CD4-positive, alpha-beta T cell (primary cell): ENCODE measurements at regions of chr11 and their contacts with region 1.

Region 1: DNA sequence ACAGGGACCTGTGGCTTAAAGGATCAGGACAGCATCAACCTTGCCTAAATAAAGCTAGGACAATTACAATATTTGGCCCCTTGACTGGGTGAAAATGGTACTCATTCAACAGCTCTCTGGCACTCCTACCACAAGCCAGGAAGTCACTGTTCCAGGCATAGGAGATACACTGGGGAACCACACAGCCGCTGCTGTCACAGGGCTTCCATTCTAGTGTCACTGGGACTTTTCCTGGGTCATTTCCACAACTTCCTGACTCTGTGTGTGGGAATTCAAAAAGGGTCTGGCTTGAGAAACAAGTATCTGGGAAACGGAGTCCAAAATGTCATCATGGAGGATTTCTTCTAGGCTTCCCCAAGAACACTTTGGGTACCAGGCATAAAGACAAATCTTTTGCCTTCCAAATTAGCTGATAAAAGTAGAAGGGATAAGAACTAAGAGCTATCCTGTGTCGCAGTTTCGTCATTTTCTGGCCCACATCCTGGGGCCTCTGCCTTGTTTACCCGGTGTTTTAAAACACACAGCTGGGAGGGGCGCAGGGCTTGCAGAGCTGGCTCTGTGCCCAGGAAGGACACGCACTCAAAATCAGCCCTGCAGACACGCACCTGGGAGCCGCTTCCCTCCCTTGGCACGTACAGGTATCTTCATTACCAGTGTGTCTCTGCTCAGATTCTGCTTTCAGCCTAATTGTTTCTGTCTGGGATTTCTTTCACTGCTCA is 38.0 kb downstream of the TMEM45B start:
- DNase-seq: peak; percentile 72 to 92 (median 86)
- ATAC-seq: peak; percentile 93
- H3K4me3 ChIP-seq: peak overlapping the region; percentile 7
- H3K4me3 Mint-ChIP-seq: peak overlapping the region; percentile 73
- H3K27ac ChIP-seq: peak overlapping the region; percentile 65 to 66
- H3K27ac Mint-ChIP-seq: peak overlapping the region; percentile 97
- H3K4me1 ChIP-seq: peaks cover 29% of the 10 kb centered on the region
- H3K4me1 Mint-ChIP-seq: peaks cover 53% of the 10 kb centered on the region
- H3K27me3 ChIP-seq: no peaks in the 10 kb centered on the region
- H3K27me3 Mint-ChIP-seq: no peaks in the 10 kb centered on the region
- CTCF ChIP-seq: no peak

Region 2: GRCh38 chr11:129410395-129410960 is 443.2 kb before region 1 on chr11:
- CTCF ChIA-PET with region 1: no interaction called
- POLR2A ChIA-PET with region 1: no interaction called
- intact Hi-C with region 1: no loop called
- DNase-seq: no peak
- ATAC-seq: no peak
- H3K4me3 ChIP-seq: no peak overlapping the region
- H3K4me3 Mint-ChIP-seq: no peak overlapping the region
- H3K27ac ChIP-seq: no peak overlapping the region
- H3K27ac Mint-ChIP-seq: no peak overlapping the region
- H3K4me1 ChIP-seq: no peaks in the 10 kb centered on the region
- H3K4me1 Mint-ChIP-seq: no peaks in the 10 kb centered on the region
- H3K27me3 ChIP-seq: no peaks in the 10 kb centered on the region
- H3K27me3 Mint-ChIP-seq: peaks cover 9% of the 10 kb centered on the region
- CTCF ChIP-seq: no peak

Region 3: GRCh38 chr11:129785383-129786111 is 68.1 kb before region 1 on chr11:
- CTCF ChIA-PET with region 1: no interaction called
- POLR2A ChIA-PET with region 1: interaction called, 10 read pairs
- intact Hi-C with region 1: loop called in 1 of 2 experiments (anchors 5 kb)
- DNase-seq: peak in 3 of 14 experiments; percentile 7 to 43 (median 29)
- ATAC-seq: no peak
- H3K4me3 ChIP-seq: no peak overlapping the region
- H3K4me3 Mint-ChIP-seq: no peak overlapping the region
- H3K27ac ChIP-seq: no peak overlapping the region
- H3K27ac Mint-ChIP-seq: no peak overlapping the region
- H3K4me1 ChIP-seq: peaks cover 4% of the 10 kb centered on the region
- H3K4me1 Mint-ChIP-seq: peaks cover 8% of the 10 kb centered on the region
- H3K27me3 ChIP-seq: no peaks in the 10 kb centered on the region
- H3K27me3 Mint-ChIP-seq: no peaks in the 10 kb centered on the region
- CTCF ChIP-seq: peak; percentile 67

Region 4: DNA sequence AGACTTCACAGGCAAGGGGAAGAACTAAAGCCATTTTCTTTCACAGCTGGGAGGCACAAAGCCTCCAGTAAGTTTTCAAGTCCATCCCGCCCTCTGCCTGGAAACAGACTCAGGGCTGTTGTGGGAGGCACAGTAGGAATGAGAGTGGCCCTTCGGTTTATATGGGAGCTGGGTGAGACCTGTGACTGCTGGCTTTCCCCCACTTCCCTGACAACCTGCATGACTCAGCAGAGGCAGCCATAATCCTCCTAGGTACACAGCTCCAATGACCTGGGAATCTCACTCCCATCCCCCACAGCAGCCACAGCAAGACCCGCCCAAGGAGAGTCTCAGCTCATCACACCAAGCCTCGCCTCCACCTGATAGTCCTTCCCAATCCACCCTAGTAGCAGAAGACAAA is 50.1 kb before region 1 on chr11:
- CTCF ChIA-PET with region 1: no interaction called
- POLR2A ChIA-PET with region 1: interaction called, 33 read pairs
- intact Hi-C with region 1: no loop called
- DNase-seq: no peak
- ATAC-seq: peak; percentile 18
- H3K4me3 ChIP-seq: no peak overlapping the region
- H3K4me3 Mint-ChIP-seq: peak overlapping the region; percentile 57
- H3K27ac ChIP-seq: peak overlapping the region in 1 of 2 donors; percentile 10
- H3K27ac Mint-ChIP-seq: peak overlapping the region; percentile 86
- H3K4me1 ChIP-seq: peaks cover 16% of the 10 kb centered on the region
- H3K4me1 Mint-ChIP-seq: peaks cover 57% of the 10 kb centered on the region
- H3K27me3 ChIP-seq: no peaks in the 10 kb centered on the region
- H3K27me3 Mint-ChIP-seq: peaks cover 6% of the 10 kb centered on the region
- CTCF ChIP-seq: no peak

Region 5: DNA sequence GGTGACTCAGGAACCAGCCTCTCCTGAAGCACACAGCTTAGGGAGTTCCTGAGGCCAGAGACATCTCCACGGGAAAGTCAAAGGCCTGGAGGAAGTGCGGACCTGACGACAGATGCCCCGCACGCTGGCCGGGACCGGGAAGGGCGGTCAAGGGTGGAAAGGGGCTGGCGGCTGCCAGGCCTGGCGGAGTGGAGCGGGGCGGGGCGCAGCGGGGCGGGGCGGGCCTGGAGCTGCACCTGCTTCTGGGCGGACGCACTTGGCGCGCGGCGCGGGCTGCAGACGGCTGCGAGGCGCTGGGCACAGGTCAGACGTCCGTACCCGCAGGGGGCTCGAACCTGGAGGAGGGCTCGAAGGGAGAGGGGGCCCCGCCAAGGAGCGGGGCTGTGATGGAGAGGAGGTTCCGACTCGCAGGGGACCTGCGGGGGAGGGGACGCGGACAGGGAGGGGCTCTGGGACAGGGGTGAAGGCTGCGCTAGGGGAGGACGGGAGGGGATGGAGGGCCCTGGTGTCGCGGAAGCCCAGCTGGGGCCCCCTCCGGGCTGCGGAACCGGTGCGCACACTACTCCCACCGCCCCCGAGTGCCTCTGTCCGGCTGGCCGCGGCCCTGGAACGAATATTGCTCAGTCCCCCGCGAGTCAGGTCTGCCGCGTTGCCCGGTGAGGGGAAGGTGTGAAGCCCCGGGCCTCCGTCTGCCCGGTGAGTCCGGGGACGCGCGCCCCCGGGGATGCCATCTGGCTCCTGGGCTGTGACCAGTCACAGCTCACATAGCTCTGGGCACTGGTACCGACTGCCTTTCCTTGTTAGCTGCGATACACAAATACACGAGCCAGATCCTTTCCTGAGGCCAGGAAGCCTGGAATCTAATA is 37.8 kb before region 1 on chr11 and contains the start of gene TMEM45B:
- CTCF ChIA-PET with region 1: no interaction called
- POLR2A ChIA-PET with region 1: interaction called, 74 read pairs
- intact Hi-C with region 1: loop called (anchors 5 kb)
- DNase-seq: peak in 13 of 14 experiments; percentile 14 to 62 (median 33)
- ATAC-seq: peak; percentile 35
- H3K4me3 ChIP-seq: peak within 1 kb of the TSS; percentile 54
- H3K4me3 Mint-ChIP-seq: peak within 1 kb of the TSS; percentile 89
- H3K27ac ChIP-seq: no peak within 1 kb of the TSS
- H3K27ac Mint-ChIP-seq: peak within 1 kb of the TSS; percentile 95
- H3K4me1 ChIP-seq: peaks cover 38% of the 10 kb centered on the region
- H3K4me1 Mint-ChIP-seq: peaks cover 58% of the 10 kb centered on the region
- H3K27me3 ChIP-seq: peaks cover 5 to 9% of the 10 kb centered on the region in 2 experiments
- H3K27me3 Mint-ChIP-seq: peaks cover 40% of the 10 kb centered on the region
- CTCF ChIP-seq: no peak
- total RNA-seq, gene TMEM45B: 1.7 to 1.9 TPM

Region 6: GRCh38 chr11:129840236-129840635 is 13.4 kb before region 1 on chr11:
- CTCF ChIA-PET with region 1: no interaction called
- POLR2A ChIA-PET with region 1: interaction called, 33 read pairs
- intact Hi-C with region 1: no loop called
- DNase-seq: peak in 2 of 14 experiments; percentile 22 to 35
- ATAC-seq: no peak
- H3K4me3 ChIP-seq: no peak overlapping the region
- H3K4me3 Mint-ChIP-seq: no peak overlapping the region
- H3K27ac ChIP-seq: no peak overlapping the region
- H3K27ac Mint-ChIP-seq: peak overlapping the region; percentile 36
- H3K4me1 ChIP-seq: peaks cover 27% of the 10 kb centered on the region
- H3K4me1 Mint-ChIP-seq: peaks cover 53% of the 10 kb centered on the region
- H3K27me3 ChIP-seq: no peaks in the 10 kb centered on the region
- H3K27me3 Mint-ChIP-seq: no peaks in the 10 kb centered on the region
- CTCF ChIP-seq: no peak